Transverse colon (tissue), 4 donors: ENCODE measurements at regions of chr18 and their contacts with region 1.

Region 1: DNA sequence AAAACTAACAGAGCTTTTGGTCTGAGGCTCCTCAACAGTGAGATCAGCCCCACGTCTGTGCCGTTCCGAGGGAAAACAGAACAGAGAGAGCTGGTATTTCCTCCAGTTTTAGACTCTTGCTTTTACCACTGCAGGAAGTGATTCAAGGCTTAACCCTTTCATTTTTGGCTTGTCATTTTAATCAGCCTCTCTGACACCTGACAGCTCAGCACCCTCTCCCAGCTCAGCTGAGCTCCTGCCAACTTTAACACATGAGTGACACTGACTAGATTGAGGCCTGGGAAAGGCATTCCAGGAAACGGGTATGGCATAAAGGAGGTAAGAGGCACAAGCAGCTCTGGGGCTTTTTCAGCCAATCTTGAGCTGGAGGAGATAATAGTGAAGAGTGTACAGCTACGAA is 239.4 kb upstream of the SKOR2 start:
- DNase-seq: no peak
- H3K4me3 ChIP-seq: no peak overlapping the region
- H3K27ac ChIP-seq: no peak overlapping the region
- H3K4me1 ChIP-seq: no peaks in the 10 kb centered on the region
- H3K27me3 ChIP-seq: no peaks in the 10 kb centered on the region
- CTCF ChIP-seq: no peak
- EP300 ChIP-seq: no peak
- POLR2A ChIP-seq: no peak

Region 2: DNA sequence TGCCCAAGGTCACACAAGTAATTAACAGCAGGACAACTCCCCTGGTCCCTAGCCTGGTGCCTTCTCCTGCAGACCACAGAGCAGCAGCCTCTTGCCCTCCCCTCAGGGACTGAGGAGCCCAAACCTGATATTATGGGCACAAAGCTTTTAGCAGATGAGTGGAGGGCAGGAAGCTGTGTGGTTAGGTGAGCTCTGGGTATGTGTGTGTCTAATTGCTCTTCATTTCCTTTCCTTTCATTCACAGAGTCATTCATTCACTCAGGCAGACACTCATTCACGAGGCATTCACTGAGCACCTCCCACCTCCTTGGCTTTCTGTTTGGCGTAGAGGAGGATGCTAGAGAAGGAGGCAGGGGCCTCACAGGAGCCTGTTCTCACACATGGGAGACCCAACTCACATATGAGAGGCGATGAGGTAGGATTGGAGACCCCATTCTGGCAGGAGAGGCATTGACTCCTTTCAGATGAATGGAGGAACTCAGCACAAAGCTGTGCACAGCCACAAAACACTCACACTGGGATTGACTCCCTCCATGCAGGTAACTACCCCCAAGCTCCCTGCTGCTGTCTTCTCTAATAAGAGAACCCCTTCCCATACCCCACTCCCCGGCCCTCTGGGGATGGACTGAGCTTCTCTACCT is 67.3 kb after region 1 on chr18:
- in situ Hi-C with region 1: loop called in 1 of 4 experiments (anchors 10 kb)
- intact Hi-C with region 1: no loop called
- DNase-seq: no peak
- H3K4me3 ChIP-seq: no peak overlapping the region
- H3K27ac ChIP-seq: no peak overlapping the region
- H3K4me1 ChIP-seq: no peaks in the 10 kb centered on the region
- H3K27me3 ChIP-seq: no peaks in the 10 kb centered on the region
- CTCF ChIP-seq: no peak
- EP300 ChIP-seq: no peak
- POLR2A ChIP-seq: no peak